ENCODE measurements at regions of chr3 and their contacts with region 1.

Region 1: DNA sequence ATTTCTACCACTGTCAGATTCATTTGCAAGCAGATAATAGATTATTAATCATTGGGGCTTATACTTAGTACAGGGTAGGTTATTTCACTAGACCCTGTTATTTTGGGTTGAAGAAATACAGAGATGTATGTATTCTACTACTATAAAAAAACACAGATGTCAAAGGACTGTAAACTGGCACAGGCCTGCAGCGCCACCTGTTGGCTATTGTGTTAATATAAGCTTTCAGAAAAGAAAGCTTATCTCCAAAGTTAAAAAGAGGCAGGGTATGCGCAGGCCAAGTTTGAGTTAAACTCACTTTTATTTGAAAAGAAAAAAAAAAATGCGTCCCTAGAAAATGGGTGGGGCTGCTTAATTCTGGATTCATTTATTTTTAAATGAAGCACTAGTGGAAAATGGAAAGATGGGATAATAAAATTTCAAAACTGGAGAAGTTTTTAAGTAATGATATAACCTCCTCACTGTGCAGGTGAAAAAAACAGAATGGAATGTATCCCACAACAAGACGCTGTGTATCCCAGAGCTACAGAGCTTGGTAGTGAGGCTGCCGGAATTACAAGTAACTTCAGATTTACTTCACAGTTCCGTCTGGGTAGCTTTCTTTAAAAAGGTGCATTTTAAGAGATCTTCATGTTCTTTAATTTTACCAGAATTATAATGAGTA is 407.2 kb upstream of the TGFBR2 start:
- DNase-seq: peak; percentile 78
- H3K4me3 ChIP-seq: no peak overlapping the region
- H3K27ac ChIP-seq: no peak overlapping the region
- H3K4me1 ChIP-seq: peaks cover 17% of the 10 kb centered on the region
- H3K27me3 ChIP-seq: no peaks in the 10 kb centered on the region
- CTCF ChIP-seq: peak; percentile 50 to 55
- POLR2A ChIP-seq: no peak

Region 2: GRCh38 chr3:30012941-30013543 is 186.2 kb before region 1 on chr3:
- CTCF ChIA-PET with region 1: interaction called, 78 read pairs
- POLR2A ChIA-PET with region 1: no interaction called
- dilution Hi-C with region 1: no loop called
- intact Hi-C with region 1: loop called (anchors 1 kb)
- DNase-seq: peak; percentile 76
- H3K4me3 ChIP-seq: no peak overlapping the region
- H3K27ac ChIP-seq: no peak overlapping the region
- H3K4me1 ChIP-seq: peaks cover 5% of the 10 kb centered on the region
- H3K27me3 ChIP-seq: no peaks in the 10 kb centered on the region
- CTCF ChIP-seq: peak; percentile 55 to 56
- POLR2A ChIP-seq: no peak

Region 3: GRCh38 chr3:30112902-30113484 is 86.2 kb before region 1 on chr3:
- CTCF ChIA-PET with region 1: interaction called, 142 read pairs
- POLR2A ChIA-PET with region 1: interaction called, 3 read pairs
- dilution Hi-C with region 1: no loop called
- intact Hi-C with region 1: loop called (anchors 1 kb)
- DNase-seq: peak; percentile 76
- H3K4me3 ChIP-seq: no peak overlapping the region
- H3K27ac ChIP-seq: no peak overlapping the region
- H3K4me1 ChIP-seq: no peaks in the 10 kb centered on the region
- H3K27me3 ChIP-seq: peaks cover 0 to 2% of the 10 kb centered on the region in 2 experiments
- CTCF ChIP-seq: peak; percentile 26 to 37
- POLR2A ChIP-seq: no peak

Region 4: DNA sequence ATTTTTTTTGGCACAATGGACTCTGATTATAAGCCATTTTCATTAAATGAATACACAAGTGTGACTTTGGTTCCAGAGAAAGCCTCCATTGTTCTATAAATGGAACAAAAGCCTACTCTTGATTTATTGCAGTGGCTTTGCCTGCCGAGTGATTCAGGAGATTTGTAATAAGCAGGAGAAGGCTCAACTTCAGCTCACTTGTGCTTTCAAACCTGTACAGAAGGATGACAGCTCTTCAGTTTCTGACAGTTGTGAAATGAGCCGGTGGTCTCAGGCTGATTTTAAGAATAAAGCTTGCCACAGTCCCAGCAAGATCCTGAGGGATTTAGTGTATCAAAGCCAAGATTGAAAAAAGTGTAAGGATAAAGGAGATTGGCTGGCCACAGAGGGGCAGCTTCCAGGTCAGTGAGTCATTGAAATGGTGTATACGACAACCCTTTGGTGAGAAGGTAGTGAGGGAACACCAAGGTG is 31.7 kb before region 1 on chr3:
- CTCF ChIA-PET with region 1: interaction called, 14 read pairs
- POLR2A ChIA-PET with region 1: no interaction called
- dilution Hi-C with region 1: no loop called
- intact Hi-C with region 1: no loop called
- DNase-seq: peak; percentile 67
- H3K4me3 ChIP-seq: no peak overlapping the region
- H3K27ac ChIP-seq: no peak overlapping the region
- H3K4me1 ChIP-seq: peaks cover 7% of the 10 kb centered on the region
- H3K27me3 ChIP-seq: peaks cover 0 to 4% of the 10 kb centered on the region in 2 experiments
- CTCF ChIP-seq: no peak
- POLR2A ChIP-seq: no peak

Region 5: DNA sequence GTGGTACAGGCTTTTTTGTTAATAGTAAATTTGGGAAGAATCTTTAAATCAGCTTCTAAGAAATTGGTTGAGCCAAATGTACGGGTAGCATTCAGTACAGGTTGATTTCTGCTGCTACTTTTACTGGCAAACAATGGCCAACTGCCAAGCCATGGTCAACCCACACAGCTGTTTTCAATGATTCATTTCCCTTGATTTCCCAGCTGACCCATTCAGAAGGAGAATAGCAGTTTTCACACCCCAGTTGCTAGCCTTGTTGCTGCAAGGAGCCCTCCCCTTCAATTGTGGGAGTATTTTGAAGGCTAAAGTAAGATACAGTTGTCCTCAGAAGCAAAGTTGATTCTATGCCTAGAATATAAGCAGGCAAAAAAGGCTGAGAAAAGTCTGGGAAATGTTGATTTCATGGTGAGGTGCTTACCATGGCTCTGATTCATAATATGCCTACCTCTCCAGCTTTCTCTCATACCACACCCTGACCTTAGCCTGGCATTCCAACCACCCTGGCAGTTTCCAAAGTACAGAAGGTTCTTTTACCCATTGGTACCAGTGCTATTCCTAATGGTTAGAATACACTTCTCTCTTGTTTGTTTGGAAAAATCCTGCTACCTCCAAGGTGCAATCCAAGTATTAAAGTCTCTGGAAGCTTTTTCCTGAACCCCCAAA is 86.9 kb after region 1 on chr3:
- CTCF ChIA-PET with region 1: interaction called, 28 read pairs
- POLR2A ChIA-PET with region 1: no interaction called
- dilution Hi-C with region 1: no loop called
- intact Hi-C with region 1: no loop called
- DNase-seq: peak; percentile 99
- H3K4me3 ChIP-seq: no peak overlapping the region
- H3K27ac ChIP-seq: peak overlapping the region; percentile 60
- H3K4me1 ChIP-seq: peaks cover 70% of the 10 kb centered on the region
- H3K27me3 ChIP-seq: no peaks in the 10 kb centered on the region
- CTCF ChIP-seq: no peak
- POLR2A ChIP-seq: peak; percentile 61

Region 6: DNA sequence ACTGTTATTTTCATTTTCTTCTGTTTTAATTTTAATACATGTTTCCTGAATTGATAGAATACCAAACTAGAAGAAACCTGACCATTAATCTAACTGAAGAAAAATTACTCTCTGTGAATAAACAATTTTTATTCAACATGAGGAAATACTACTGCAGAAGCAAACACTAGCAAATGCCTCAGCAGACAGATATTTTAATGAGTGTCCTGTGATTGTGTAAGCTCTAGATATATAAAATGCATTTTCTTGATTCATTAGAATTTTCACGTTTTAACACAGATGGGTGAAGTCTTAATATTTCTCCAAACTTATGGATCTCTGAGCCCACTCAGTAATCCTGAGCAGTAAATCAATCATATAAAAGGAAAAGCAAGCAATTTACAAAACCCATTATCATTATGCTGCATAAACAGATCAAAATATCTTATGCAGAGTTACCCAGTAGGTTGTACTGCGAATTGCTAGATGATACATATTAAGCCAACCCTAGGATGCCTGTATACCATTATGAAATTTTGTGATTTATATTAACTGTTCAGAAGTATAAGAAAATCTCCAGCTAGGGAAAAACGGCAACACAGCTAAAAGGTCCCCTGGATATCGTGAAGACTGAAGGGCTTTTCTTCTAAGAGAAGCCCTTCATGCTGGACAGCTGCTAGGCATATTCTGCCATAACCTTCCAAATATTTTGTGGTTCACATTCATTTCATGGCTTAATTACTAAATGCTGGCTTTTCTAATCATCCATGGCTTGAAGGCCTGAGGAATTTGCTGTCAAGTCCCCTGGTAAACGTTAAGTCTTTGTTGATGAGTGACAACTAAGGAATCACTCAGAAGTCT is 249.4 kb after region 1 on chr3:
- CTCF ChIA-PET with region 1: no interaction called
- POLR2A ChIA-PET with region 1: no interaction called
- dilution Hi-C with region 1: no loop called
- intact Hi-C with region 1: no loop called
- DNase-seq: no peak
- H3K4me3 ChIP-seq: no peak overlapping the region
- H3K27ac ChIP-seq: no peak overlapping the region
- H3K4me1 ChIP-seq: no peaks in the 10 kb centered on the region
- H3K27me3 ChIP-seq: no peaks in the 10 kb centered on the region
- CTCF ChIP-seq: no peak
- POLR2A ChIP-seq: no peak

Region 7: GRCh38 chr3:30518181-30518864 is 319.1 kb after region 1 on chr3:
- CTCF ChIA-PET with region 1: interaction called, 16 read pairs
- POLR2A ChIA-PET with region 1: no interaction called
- dilution Hi-C with region 1: no loop called
- intact Hi-C with region 1: loop called (anchors 2 kb)
- DNase-seq: peak; percentile 99
- H3K4me3 ChIP-seq: no peak overlapping the region
- H3K27ac ChIP-seq: peak overlapping the region; percentile 93
- H3K4me1 ChIP-seq: peaks cover 66% of the 10 kb centered on the region
- H3K27me3 ChIP-seq: no peaks in the 10 kb centered on the region
- CTCF ChIP-seq: peak; percentile 17 to 37
- POLR2A ChIP-seq: peak; percentile 81

Region 8: GRCh38 chr3:30693470-30694120 is 494.4 kb after region 1 on chr3:
- CTCF ChIA-PET with region 1: interaction called, 42 read pairs
- POLR2A ChIA-PET with region 1: no interaction called
- dilution Hi-C with region 1: no loop called
- intact Hi-C with region 1: loop called (anchors 1 kb)
- DNase-seq: peak; percentile 85
- H3K4me3 ChIP-seq: no peak overlapping the region
- H3K27ac ChIP-seq: peak overlapping the region; percentile 25
- H3K4me1 ChIP-seq: peaks cover 45% of the 10 kb centered on the region
- H3K27me3 ChIP-seq: no peaks in the 10 kb centered on the region
- CTCF ChIP-seq: peak; percentile 57 to 65
- POLR2A ChIP-seq: peak; percentile 24

Measured in endothelial cell of umbilical vein (primary cell).